Activated naive CD4-positive, alpha-beta T cell treated with anti-CD3 and anti-CD28 coated beads, Interleukin-2, amount 10 ng/mL, durations not matched to agents 7 days and 5 days (primary cell): ENCODE measurements at regions of chr2 and their contacts with region 1.

Region 1: DNA sequence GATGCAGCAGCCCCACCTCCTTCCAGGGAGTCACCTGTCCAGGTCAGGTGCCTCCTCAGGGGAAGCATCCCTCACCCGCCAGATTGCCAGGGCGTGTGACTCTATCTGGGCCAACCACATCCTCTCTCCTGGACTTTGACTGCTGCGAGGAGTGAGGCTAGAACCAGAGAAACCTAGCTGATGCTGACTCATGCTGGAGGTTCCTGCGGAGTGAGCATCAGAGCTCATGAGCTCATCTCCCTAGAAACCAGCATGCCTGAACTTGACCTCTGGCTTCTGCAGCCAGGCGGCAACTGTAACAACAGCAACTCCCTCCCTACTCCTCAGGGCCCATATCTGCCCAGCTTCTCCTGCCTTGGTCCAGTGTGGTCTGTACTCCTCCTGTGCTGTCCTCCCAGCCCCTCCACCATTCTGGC is 28.3 kb upstream of the NT5DC4 start:
- DNase-seq: peak; percentile 77
- H3K4me3 Mint-ChIP-seq: no peak overlapping the region
- H3K27ac Mint-ChIP-seq: peak overlapping the region; percentile 75
- H3K4me1 Mint-ChIP-seq: peaks cover 32% of the 10 kb centered on the region
- H3K27me3 Mint-ChIP-seq: peaks cover 27% of the 10 kb centered on the region

Region 2: DNA sequence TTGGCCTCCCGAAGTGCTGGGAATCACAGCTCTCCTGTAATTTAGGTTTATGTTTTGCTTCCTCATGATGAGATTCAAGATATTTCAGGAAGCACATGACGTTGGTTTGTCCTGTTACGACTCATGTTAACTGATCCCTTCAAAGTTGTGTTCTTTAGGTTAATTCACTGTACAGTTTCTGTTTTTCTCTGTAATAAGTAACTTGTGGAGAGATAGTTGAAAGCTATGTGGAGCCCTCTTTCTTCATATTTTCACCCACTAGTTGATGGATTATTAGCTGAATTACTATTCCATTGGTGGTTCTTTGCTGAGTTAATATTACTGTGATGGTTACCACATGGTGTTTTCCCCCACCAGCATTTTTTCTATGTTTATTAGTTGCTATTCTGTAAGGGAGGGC is 126.4 kb before region 1 on chr2:
- CTCF ChIA-PET with region 1: no interaction called
- DNase-seq: no peak
- H3K4me3 Mint-ChIP-seq: no peak overlapping the region
- H3K27ac Mint-ChIP-seq: no peak overlapping the region
- H3K4me1 Mint-ChIP-seq: no peaks in the 10 kb centered on the region
- H3K27me3 Mint-ChIP-seq: no peaks in the 10 kb centered on the region

Region 3: DNA sequence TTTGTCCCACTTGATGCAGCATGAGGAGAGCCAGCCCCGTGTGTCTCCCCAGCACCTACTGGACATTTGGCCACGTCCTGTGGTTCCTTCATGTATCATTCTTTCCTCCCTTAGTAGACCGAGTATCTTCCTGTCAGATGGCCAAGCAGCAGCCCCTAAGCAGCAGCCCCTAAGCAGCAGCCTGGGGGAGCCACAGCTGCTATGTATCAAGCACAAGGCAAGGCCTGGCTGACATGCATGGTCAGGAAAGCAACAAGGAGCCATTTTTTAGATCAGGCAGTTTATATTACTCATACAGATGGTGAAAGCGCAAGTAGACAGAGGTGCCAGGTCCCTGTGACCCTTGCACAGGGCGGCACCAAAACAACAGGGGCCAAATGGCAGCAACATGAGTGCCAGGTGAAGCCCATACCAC is 86.0 kb before region 1 on chr2:
- CTCF ChIA-PET with region 1: interaction called, 14 read pairs
- DNase-seq: no peak
- H3K4me3 Mint-ChIP-seq: no peak overlapping the region
- H3K27ac Mint-ChIP-seq: no peak overlapping the region
- H3K4me1 Mint-ChIP-seq: no peaks in the 10 kb centered on the region
- H3K27me3 Mint-ChIP-seq: peaks cover 16% of the 10 kb centered on the region

Region 4: GRCh38 chr2:112634153-112634873 is 58.2 kb before region 1 on chr2:
- CTCF ChIA-PET with region 1: interaction called, 19 read pairs
- DNase-seq: peak; percentile 35
- H3K4me3 Mint-ChIP-seq: peak overlapping the region; percentile 7
- H3K27ac Mint-ChIP-seq: peak overlapping the region; percentile 61
- H3K4me1 Mint-ChIP-seq: peaks cover 79% of the 10 kb centered on the region
- H3K27me3 Mint-ChIP-seq: peaks cover 7% of the 10 kb centered on the region

Region 5: DNA sequence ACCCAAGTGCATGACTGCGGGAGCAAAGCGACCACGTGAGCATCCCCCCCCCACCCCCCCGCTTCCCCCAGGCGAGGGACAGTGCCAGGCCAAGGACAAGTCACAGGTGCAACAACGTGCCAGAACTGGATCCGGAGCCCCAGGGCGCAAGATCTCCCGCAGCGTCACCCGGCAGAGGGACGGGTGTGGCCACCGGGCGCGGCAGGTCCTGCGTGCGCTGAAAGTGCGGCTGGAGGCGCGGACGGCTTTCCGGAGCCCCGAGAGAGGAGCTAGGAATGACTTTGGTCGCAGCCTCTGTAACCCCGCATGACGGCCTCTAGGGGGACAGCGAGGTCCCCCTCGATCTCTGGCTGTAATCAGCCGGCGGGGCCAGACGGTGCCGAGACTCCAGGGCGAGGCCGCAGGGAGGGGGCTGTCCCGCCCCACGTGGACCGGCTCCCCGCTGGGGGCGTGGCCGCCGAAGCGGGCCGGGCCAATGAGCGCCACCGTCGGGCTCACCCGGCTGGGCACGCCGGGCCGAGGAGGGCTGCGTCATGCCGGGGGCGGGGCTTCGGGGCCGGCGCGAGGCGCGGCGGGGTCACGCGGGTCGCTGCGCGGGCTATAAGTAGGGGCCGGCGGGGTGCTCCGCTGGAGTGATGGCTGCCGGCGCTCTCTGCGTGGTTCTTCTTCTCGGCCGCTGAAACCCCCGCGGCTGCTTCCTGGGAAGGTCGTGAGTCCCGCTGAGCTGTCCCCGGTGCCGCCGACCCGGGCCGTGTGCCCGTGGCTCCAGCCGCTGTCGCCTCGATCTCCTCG is 47.0 kb before region 1 on chr2 and contains the start of gene SLC20A1:
- CTCF ChIA-PET with region 1: interaction called, 18 read pairs
- DNase-seq: peak; percentile 98
- H3K4me3 Mint-ChIP-seq: peak within 1 kb of the TSS; percentile 99
- H3K27ac Mint-ChIP-seq: peak within 1 kb of the TSS; percentile 93
- H3K4me1 Mint-ChIP-seq: peaks cover 69% of the 10 kb centered on the region
- H3K27me3 Mint-ChIP-seq: no peaks in the 10 kb centered on the region

Region 6: GRCh38 chr2:112706170-112706664 is 13.7 kb after region 1 on chr2:
- CTCF ChIA-PET with region 1: interaction called, 28 read pairs
- DNase-seq: peak; percentile 87
- H3K4me3 Mint-ChIP-seq: no peak overlapping the region
- H3K27ac Mint-ChIP-seq: peak overlapping the region; percentile 62
- H3K4me1 Mint-ChIP-seq: peaks cover 46% of the 10 kb centered on the region
- H3K27me3 Mint-ChIP-seq: peaks cover 39% of the 10 kb centered on the region